K562 (cell line): ENCODE measurements at regions of chr16 and their contacts with region 1.

Region 1: DNA sequence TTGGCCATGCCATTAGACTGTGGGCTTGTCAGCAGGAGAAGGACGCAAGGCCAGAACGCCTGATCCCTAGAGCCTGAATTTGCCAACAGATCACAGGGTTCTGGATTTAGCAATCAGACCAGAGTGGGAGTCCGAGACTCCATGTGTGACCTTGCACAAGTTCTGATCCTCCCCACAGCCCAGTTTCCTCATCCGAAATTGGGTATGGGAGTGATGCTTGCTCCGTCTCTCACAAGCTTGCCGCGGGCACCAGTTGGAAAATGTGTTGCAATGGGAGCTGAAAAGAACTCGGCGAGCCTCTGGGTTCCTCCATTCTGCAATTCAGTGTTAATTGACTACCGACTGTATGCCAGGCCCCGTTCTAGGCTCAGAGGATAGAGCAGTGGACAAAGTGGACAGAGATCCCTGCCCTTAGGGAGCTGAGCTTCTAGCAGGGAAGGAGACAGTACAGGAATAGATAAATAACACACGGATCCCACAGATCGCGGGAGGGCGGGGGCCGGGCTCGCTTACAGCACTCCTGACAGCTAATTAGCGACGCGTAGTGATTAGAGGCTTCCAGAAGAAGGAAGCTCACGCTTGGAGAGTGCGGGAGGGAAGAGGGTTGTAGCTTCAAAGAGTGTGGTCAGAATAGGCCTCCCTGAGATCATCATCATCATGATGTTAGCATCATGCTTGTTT is 150.4 kb upstream of the CIBAR2 start:
- DNase-seq: peak in 1 of 4 experiments; percentile 44
- ATAC-seq: peak; percentile 24
- H3K4me3 ChIP-seq: no peak overlapping the region
- H3K27ac ChIP-seq: no peak overlapping the region
- H3K4me1 ChIP-seq: peaks cover 17 to 71% of the 10 kb centered on the region in 2 experiments; a peak in 4 of 5 replicates
- H3K27me3 ChIP-seq: no peaks in the 10 kb centered on the region
- CTCF ChIP-seq: no peak
- EP300 ChIP-seq: no peak
- POLR2A ChIP-seq: no peak
- RAD21 ChIP-seq: no peak

Region 2: GRCh38 chr16:85046931-85047866 is 215.5 kb before region 1 on chr16:
- CTCF ChIA-PET with region 1: no interaction called
- POLR2A ChIA-PET with region 1: no interaction called
- in situ Hi-C with region 1: no loop called
- intact Hi-C with region 1: no loop called
- DNase-seq: peak; percentile 84 to 98 (median 90)
- ATAC-seq: peak; percentile 91
- H3K4me3 ChIP-seq: peak overlapping the region; percentile 41
- H3K27ac ChIP-seq: peak overlapping the region; percentile 87
- H3K4me1 ChIP-seq: peaks cover 66 to 67% of the 10 kb centered on the region in 2 experiments
- H3K27me3 ChIP-seq: no peaks in the 10 kb centered on the region
- CTCF ChIP-seq: 0 out of 6 replicates have a peak, but pooled peaks of 1 of the 3 experiments have one; percentile 26
- EP300 ChIP-seq: peak; percentile 95
- POLR2A ChIP-seq: peak; percentile 84
- RAD21 ChIP-seq: peak in 1 of 2 experiments; percentile 35; a peak in 1 of 4 replicates

Region 3: GRCh38 chr16:85274924-85275323 is 12.2 kb after region 1 on chr16:
- CTCF ChIA-PET with region 1: no interaction called
- POLR2A ChIA-PET with region 1: interaction called, 11 read pairs
- in situ Hi-C with region 1: no loop called
- intact Hi-C with region 1: no loop called
- DNase-seq: peak; percentile 65 to 76 (median 72)
- ATAC-seq: peak; percentile 75
- H3K4me3 ChIP-seq: no peak overlapping the region
- H3K27ac ChIP-seq: no peak overlapping the region
- H3K4me1 ChIP-seq: peaks cover 10 to 43% of the 10 kb centered on the region in 2 experiments
- H3K27me3 ChIP-seq: no peaks in the 10 kb centered on the region
- CTCF ChIP-seq: no peak
- EP300 ChIP-seq: no peak
- POLR2A ChIP-seq: no peak
- RAD21 ChIP-seq: no peak

Region 4: GRCh38 chr16:85393674-85394483 is 131.2 kb after region 1 on chr16:
- CTCF ChIA-PET with region 1: no interaction called
- POLR2A ChIA-PET with region 1: no interaction called
- in situ Hi-C with region 1: no loop called
- intact Hi-C with region 1: no loop called
- DNase-seq: peak; percentile 86 to 94 (median 93)
- ATAC-seq: peak; percentile 87
- H3K4me3 ChIP-seq: no peak overlapping the region
- H3K27ac ChIP-seq: 0 out of 3 replicates have a peak overlapping the region, but pooled peaks have one; percentile 11
- H3K4me1 ChIP-seq: peaks cover 48 to 77% of the 10 kb centered on the region in 2 experiments
- H3K27me3 ChIP-seq: no peaks in the 10 kb centered on the region
- CTCF ChIP-seq: peak; percentile 83 to 96 (median 95)
- EP300 ChIP-seq: no peak
- POLR2A ChIP-seq: no peak
- RAD21 ChIP-seq: peak; percentile 63 to 80

Region 5: GRCh38 chr16:85461814-85462713 is 199.4 kb after region 1 on chr16:
- CTCF ChIA-PET with region 1: no interaction called
- POLR2A ChIA-PET with region 1: no interaction called
- in situ Hi-C with region 1: no loop called
- intact Hi-C with region 1: no loop called
- DNase-seq: peak; percentile 95 to 97 (median 96)
- ATAC-seq: peak; percentile 88
- H3K4me3 ChIP-seq: peak overlapping the region; percentile 34
- H3K27ac ChIP-seq: peak overlapping the region; percentile 78
- H3K4me1 ChIP-seq: peaks cover 45 to 85% of the 10 kb centered on the region in 2 experiments
- H3K27me3 ChIP-seq: no peaks in the 10 kb centered on the region
- CTCF ChIP-seq: peak in 1 of 3 experiments; percentile 6; a peak in 1 of 6 replicates
- EP300 ChIP-seq: peak; percentile 67; the same call in 1 of the 2 replicates
- POLR2A ChIP-seq: no peak; the same call in 1 of the 2 replicates
- RAD21 ChIP-seq: no peak; a peak in 1 of 4 replicates

Region 6: GRCh38 chr16:85607321-85607765 is 344.6 kb after region 1 on chr16:
- CTCF ChIA-PET with region 1: no interaction called
- POLR2A ChIA-PET with region 1: no interaction called
- in situ Hi-C with region 1: no loop called
- intact Hi-C with region 1: no loop called
- DNase-seq: peak; percentile 49 to 76 (median 56)
- ATAC-seq: peak; percentile 15
- H3K4me3 ChIP-seq: no peak overlapping the region
- H3K27ac ChIP-seq: peak overlapping the region; percentile 74; the same call in 1 of the 3 replicates
- H3K4me1 ChIP-seq: peaks cover 78 to 82% of the 10 kb centered on the region in 2 experiments
- H3K27me3 ChIP-seq: no peaks in the 10 kb centered on the region
- CTCF ChIP-seq: peak in 2 of 3 experiments; percentile 22 to 54; a peak in 3 of 6 replicates
- EP300 ChIP-seq: no peak
- POLR2A ChIP-seq: no peak
- RAD21 ChIP-seq: no peak